Ovary (tissue), 10 donors: ENCODE measurements at regions of chr2 and their contacts with region 1.

Region 1: GRCh38 chr2:26678026-26678425 is 14.5 kb upstream of the KCNK3 start:
- DNase-seq: no peak
- H3K4me3 ChIP-seq: no peak overlapping the region
- H3K27ac ChIP-seq: no peak overlapping the region
- H3K4me1 ChIP-seq: no peaks in the 10 kb centered on the region
- H3K27me3 ChIP-seq: no peaks in the 10 kb centered on the region
- CTCF ChIP-seq: no peak
- EP300 ChIP-seq: no peak
- POLR2A ChIP-seq: no peak

Region 2: GRCh38 chr2:26706616-26707473 is 28.8 kb after region 1 on chr2:
- intact Hi-C with region 1: loop called in 1 of 4 experiments (anchors 1 kb)
- DNase-seq: peak in 3 of 5 donors; percentile 18 to 66 (median 29)
- H3K4me3 ChIP-seq: no peak overlapping the region
- H3K27ac ChIP-seq: no peak overlapping the region
- H3K4me1 ChIP-seq: peaks cover 6% of the 10 kb centered on the region
- H3K27me3 ChIP-seq: no peaks in the 10 kb centered on the region
- CTCF ChIP-seq: no peak
- EP300 ChIP-seq: no peak
- POLR2A ChIP-seq: no peak

Region 3: DNA sequence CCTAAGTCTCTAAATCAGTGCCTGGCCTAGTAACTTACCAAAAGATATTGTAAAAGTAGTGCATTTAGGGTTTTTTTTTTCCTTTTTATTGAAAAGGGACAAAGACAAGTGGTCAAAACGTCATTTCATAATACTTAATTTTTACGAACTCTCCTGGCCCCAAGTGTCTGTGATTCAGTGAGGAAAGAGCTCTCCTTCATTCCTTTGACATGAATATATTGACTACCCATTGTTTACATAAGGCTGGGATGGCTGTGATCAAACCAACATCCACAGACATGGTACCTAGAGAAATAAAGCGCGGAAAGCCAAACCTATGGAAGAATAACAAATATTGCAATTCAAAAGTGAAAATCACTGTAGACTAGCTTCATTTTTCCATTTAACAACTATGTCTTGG is 1410.9 kb after region 1 on chr2:
- intact Hi-C with region 1: no loop called
- DNase-seq: no peak
- H3K4me3 ChIP-seq: no peak overlapping the region
- H3K27ac ChIP-seq: no peak overlapping the region
- H3K4me1 ChIP-seq: peaks cover 6% of the 10 kb centered on the region
- H3K27me3 ChIP-seq: no peaks in the 10 kb centered on the region
- CTCF ChIP-seq: no peak
- EP300 ChIP-seq: no peak
- POLR2A ChIP-seq: no peak